Tibial artery (tissue), 4 donors: ENCODE measurements at regions of chr11 and their contacts with region 1.

Region 1: GRCh38 chr11:110453684-110454354 is 24.1 kb downstream of the FDX1 start:
- DNase-seq: no peak
- H3K4me3 ChIP-seq: no peak overlapping the region
- H3K27ac ChIP-seq: no peak overlapping the region
- H3K4me1 ChIP-seq: peaks cover 0 to 10% (median 0%) of the 10 kb centered on the region in 4 donors
- H3K27me3 ChIP-seq: no peaks in the 10 kb centered on the region
- CTCF ChIP-seq: no peak

Region 2: GRCh38 chr11:110392056-110392455 is 61.8 kb before region 1 on chr11:
- intact Hi-C with region 1: no loop called
- DNase-seq: no peak
- H3K4me3 ChIP-seq: no peak overlapping the region
- H3K27ac ChIP-seq: no peak overlapping the region
- H3K4me1 ChIP-seq: no peaks in the 10 kb centered on the region
- H3K27me3 ChIP-seq: no peaks in the 10 kb centered on the region
- CTCF ChIP-seq: no peak

Region 3: GRCh38 chr11:112044961-112045360 is 1591.1 kb after region 1 on chr11:
- intact Hi-C with region 1: loop called (anchors 5 kb)
- DNase-seq: no peak
- H3K4me3 ChIP-seq: no peak overlapping the region
- H3K27ac ChIP-seq: no peak overlapping the region
- H3K4me1 ChIP-seq: peaks cover 0 to 9% (median 0%) of the 10 kb centered on the region in 4 donors
- H3K27me3 ChIP-seq: no peaks in the 10 kb centered on the region
- CTCF ChIP-seq: no peak